Dendritic cell treated with granulocyte-macrophage colony-stimulating factor and Interleukin-4, amounts not matched to agents 40 ng/mL and 50 ng/mL, for 4 days (primary cell): ENCODE measurements at regions of chr20 and their contacts with region 1.

Region 1: GRCh38 chr20:17129089-17129488 is 97.8 kb upstream of the PCSK2 start:
- H3K4me3 Mint-ChIP-seq: no peak overlapping the region
- H3K27ac Mint-ChIP-seq: no peak overlapping the region
- H3K4me1 Mint-ChIP-seq: no peaks in the 10 kb centered on the region
- H3K27me3 Mint-ChIP-seq: no peaks in the 10 kb centered on the region

Region 2: DNA sequence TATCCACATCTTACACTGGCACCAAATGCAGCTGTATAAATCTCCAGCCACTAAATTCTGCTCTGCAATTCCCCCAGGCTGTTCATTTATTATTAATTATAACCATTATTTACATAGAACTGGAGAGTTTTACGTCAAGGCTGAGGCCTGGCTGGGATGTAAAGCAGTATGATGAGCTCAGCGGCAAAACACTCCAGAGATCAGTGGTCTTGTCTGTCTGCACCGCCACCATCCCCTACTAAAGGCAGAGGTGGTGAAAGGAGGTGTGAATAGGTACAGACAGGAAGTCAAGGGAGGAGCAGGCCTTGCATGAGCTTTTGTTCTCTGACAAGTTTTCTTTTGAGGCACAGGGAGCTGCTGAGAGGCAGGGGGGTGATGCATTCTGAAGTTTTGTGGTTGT is 62.2 kb before region 1 on chr20:
- intact Hi-C with region 1: loop called (anchors 10 kb)
- H3K4me3 Mint-ChIP-seq: no peak overlapping the region
- H3K27ac Mint-ChIP-seq: no peak overlapping the region
- H3K4me1 Mint-ChIP-seq: no peaks in the 10 kb centered on the region
- H3K27me3 Mint-ChIP-seq: no peaks in the 10 kb centered on the region

Region 3: DNA sequence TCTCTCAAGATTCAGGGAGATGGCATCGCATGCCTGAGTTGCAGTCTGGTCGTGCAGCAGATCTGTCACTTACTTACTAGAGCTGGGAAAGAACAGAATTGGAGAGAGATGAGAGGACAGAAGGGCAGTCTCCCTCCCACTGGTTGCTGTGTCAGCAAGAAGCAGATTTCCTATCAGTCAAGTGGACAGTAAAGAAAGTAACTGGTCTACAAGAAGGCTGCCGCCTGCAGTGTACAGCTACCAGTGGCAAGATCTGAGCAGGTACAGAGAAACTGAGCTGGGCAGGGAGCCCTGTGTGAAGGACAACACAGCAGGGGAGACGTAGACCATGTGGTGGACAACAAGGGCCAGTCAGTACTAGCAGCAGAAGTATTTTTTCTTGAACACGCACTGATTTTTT is 48.3 kb after region 1 on chr20:
- intact Hi-C with region 1: no loop called
- H3K4me3 Mint-ChIP-seq: no peak overlapping the region
- H3K27ac Mint-ChIP-seq: no peak overlapping the region
- H3K4me1 Mint-ChIP-seq: no peaks in the 10 kb centered on the region
- H3K27me3 Mint-ChIP-seq: no peaks in the 10 kb centered on the region